Stomach (tissue), 19 donors: ENCODE measurements at regions of chr11 and their contacts with region 1.

Region 1: GRCh38 chr11:44727373-44728287 is 868 bp downstream of the TSPAN18 start:
- DNase-seq: peak; percentile 77 to 95
- H3K4me3 ChIP-seq: peak overlapping the region; percentile 68 to 76 (median 71)
- H3K27ac ChIP-seq: peak overlapping the region; percentile 16 to 85 (median 72)
- H3K4me1 ChIP-seq: peaks cover 15 to 56% (median 38%) of the 10 kb centered on the region in 4 donors
- H3K27me3 ChIP-seq: peaks cover 0 to 55% (median 35%) of the 10 kb centered on the region in 3 donors
- CTCF ChIP-seq: peak in 5 of 7 experiments; percentile 60 to 94 (median 86)
- EP300 ChIP-seq: no peak
- POLR2A ChIP-seq: no peak

Region 2: DNA sequence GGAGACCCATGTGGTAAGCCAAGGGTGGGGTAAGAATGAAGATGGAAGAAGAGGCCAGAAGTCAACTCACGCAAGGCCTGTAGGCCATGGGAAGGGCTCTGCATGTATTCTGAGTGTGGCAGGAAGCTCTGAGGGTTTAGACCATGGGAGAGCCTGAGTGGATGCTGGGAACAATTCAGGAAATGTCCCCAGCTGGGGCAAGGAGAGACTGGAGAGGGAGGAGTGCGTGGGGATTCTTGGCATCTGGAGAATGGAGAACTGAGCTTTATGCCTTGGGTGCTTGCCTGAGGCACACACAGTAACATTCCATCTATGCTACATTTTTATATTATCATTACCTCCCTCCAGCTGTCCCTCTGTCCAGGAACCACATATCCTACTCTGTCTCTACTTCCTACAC is 212.6 kb before region 1 on chr11:
- intact Hi-C with region 1: no loop called
- DNase-seq: no peak
- H3K4me3 ChIP-seq: no peak overlapping the region
- H3K27ac ChIP-seq: no peak overlapping the region
- H3K4me1 ChIP-seq: peaks cover 0 to 7% (median 2%) of the 10 kb centered on the region in 4 donors
- H3K27me3 ChIP-seq: peaks cover 0 to 14% (median 0%) of the 10 kb centered on the region in 3 donors
- CTCF ChIP-seq: no peak
- EP300 ChIP-seq: no peak
- POLR2A ChIP-seq: no peak

Region 3: DNA sequence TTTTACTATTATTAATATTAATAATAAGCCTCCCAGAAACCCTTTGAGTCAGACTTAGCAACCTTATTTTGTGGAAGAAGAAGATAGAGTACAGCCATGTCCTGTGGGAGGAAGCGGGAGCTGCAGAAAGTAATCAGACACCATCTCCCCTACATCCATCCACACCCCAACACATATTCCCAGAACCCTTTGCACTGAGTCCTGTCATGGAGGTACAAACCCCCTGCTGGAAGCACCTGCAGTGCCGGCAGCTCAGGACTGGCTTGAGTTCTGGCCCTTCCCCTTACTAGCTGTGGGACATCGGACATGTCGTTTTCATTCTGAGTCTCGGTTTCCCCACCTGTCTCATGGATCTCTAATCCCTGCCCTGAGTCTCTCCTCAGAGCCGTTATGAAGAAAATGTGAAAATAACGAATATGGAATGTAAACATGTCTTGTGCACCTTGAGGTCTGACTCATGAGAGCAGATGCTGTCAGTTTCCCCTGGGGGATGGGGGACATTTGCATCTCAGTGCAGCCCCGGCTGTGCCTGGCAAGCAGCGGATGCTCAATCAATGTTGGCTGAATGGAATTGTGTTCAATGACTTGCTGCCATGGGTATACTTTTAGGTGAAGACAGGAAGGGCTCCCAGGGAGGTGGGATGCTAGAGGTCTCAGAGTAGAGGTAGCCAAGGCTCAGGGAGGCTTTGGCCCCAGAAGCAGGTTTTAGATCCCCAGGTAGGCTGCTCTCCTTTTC is 177.7 kb after region 1 on chr11:
- intact Hi-C with region 1: loop called (anchors 5 kb)
- DNase-seq: no peak
- H3K4me3 ChIP-seq: no peak overlapping the region
- H3K27ac ChIP-seq: no peak overlapping the region
- H3K4me1 ChIP-seq: peaks cover 0 to 7% (median 0%) of the 10 kb centered on the region in 4 donors
- H3K27me3 ChIP-seq: peaks cover 0 to 5% (median 0%) of the 10 kb centered on the region in 3 donors
- CTCF ChIP-seq: no peak
- EP300 ChIP-seq: no peak
- POLR2A ChIP-seq: no peak